Activated CD8-positive, alpha-beta memory T cell treated with anti-CD3 and anti-CD28 coated beads, Interleukin-2, amount 10 ng/mL, durations not matched to agents 7 days and 5 days (primary cell): ENCODE measurements at regions of chr17 and their contacts with region 1.

Region 1: DNA sequence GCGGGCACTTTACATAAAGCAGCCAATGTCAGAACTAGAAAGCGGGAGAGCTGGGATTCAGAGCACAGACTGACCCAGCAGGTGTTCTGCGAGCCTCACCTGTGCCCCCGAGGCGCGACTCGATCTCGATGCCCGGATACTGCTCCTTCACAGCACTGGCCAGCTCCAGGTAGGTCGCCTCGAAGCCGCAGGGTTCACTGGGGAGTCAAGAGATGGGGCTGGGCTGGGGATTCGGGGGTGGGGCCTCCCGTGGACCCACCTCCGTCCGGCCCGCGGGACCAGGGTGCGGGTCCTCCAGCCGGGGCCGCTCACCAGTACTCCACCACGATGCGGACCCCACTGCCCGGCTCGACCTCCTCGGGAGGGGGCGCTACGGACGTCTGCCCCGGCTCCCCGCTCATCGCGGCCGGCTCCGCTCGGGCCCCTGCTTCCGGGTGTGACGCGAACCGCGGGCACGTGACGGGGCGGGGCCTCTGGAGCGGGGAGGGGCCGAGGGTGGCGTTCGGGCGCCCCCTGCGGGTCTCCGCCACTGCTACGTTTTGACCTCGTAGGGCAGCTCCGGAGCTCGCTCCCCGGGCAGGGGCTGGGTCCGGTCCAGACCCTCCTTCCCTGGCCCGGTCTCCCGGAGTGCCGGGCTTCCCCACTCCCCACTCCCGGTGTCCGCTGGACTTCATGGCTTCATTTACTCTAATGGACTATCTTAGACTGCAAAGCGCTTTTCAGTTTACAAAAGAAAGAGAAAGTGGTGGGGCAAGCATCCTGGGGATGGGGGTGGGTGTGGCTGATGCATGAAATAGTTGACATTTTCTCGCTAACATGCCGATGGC is at the start of gene MIEN1:
- DNase-seq: peak; percentile 94
- ATAC-seq: peak; percentile 92
- H3K4me3 Mint-ChIP-seq: peak within 1 kb of the TSS; percentile 88
- H3K27ac Mint-ChIP-seq: peak within 1 kb of the TSS; percentile 84
- H3K4me1 Mint-ChIP-seq: peaks cover 19% of the 10 kb centered on the region
- H3K27me3 Mint-ChIP-seq: no peaks in the 10 kb centered on the region
- total RNA-seq, gene MIEN1: 45.9 to 46.8 TPM

Region 2: GRCh38 chr17:39653662-39654331 is 76.5 kb before region 1 on chr17:
- CTCF ChIA-PET with region 1: interaction called, 17 read pairs
- DNase-seq: peak; percentile 87
- ATAC-seq: peak; percentile 89
- H3K4me3 Mint-ChIP-seq: no peak overlapping the region
- H3K27ac Mint-ChIP-seq: peak overlapping the region; percentile 24
- H3K4me1 Mint-ChIP-seq: peaks cover 12% of the 10 kb centered on the region
- H3K27me3 Mint-ChIP-seq: no peaks in the 10 kb centered on the region

Region 3: GRCh38 chr17:39676198-39676819 is 54.0 kb before region 1 on chr17:
- CTCF ChIA-PET with region 1: interaction called, 12 read pairs
- DNase-seq: peak; percentile 81
- ATAC-seq: peak; percentile 85
- H3K4me3 Mint-ChIP-seq: no peak overlapping the region
- H3K27ac Mint-ChIP-seq: peak overlapping the region; percentile 79
- H3K4me1 Mint-ChIP-seq: peaks cover 56% of the 10 kb centered on the region
- H3K27me3 Mint-ChIP-seq: peaks cover 2% of the 10 kb centered on the region

Region 4: GRCh38 chr17:39744836-39745672 is 14.7 kb after region 1 on chr17:
- CTCF ChIA-PET with region 1: interaction called, 14 read pairs
- DNase-seq: no peak
- ATAC-seq: no peak
- H3K4me3 Mint-ChIP-seq: no peak overlapping the region
- H3K27ac Mint-ChIP-seq: no peak overlapping the region
- H3K4me1 Mint-ChIP-seq: peaks cover 5% of the 10 kb centered on the region
- H3K27me3 Mint-ChIP-seq: peaks cover 6% of the 10 kb centered on the region

Region 5: GRCh38 chr17:39863918-39864746 is 133.8 kb after region 1 on chr17 and contains the start of gene IKZF3:
- CTCF ChIA-PET with region 1: interaction called, 15 read pairs
- DNase-seq: peak; percentile 87
- ATAC-seq: peak; percentile 60
- H3K4me3 Mint-ChIP-seq: peak within 1 kb of the TSS; percentile 81
- H3K27ac Mint-ChIP-seq: peak within 1 kb of the TSS; percentile 94
- H3K4me1 Mint-ChIP-seq: peaks cover 58% of the 10 kb centered on the region
- H3K27me3 Mint-ChIP-seq: peaks cover 4% of the 10 kb centered on the region
- total RNA-seq, gene IKZF3: 70.8 to 119 TPM

Region 6: DNA sequence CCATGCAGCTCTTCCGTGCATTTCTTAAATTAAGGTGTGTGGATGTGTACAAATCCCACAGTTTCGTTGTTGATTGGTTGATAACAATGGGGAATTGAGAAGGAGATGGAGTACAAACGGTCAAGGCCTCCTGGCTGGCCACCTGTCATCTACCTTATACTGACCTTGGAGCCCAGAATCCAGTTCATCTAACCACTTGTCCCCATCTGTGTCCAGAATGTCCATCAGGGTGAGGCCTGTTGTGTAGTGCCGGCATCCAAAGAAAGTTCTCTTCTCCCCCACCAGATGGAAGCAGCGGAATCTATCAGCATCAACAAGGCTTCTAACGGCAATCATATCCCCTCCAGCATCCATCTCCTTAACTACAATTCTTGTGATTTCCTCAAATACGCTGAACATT is 186.6 kb after region 1 on chr17:
- CTCF ChIA-PET with region 1: no interaction called
- DNase-seq: no peak
- ATAC-seq: no peak
- H3K4me3 Mint-ChIP-seq: no peak overlapping the region
- H3K27ac Mint-ChIP-seq: peak overlapping the region; percentile 47
- H3K4me1 Mint-ChIP-seq: peaks cover 57% of the 10 kb centered on the region
- H3K27me3 Mint-ChIP-seq: no peaks in the 10 kb centered on the region